ENCODE measurements at regions of chrX and their contacts with region 1.

Region 1: DNA sequence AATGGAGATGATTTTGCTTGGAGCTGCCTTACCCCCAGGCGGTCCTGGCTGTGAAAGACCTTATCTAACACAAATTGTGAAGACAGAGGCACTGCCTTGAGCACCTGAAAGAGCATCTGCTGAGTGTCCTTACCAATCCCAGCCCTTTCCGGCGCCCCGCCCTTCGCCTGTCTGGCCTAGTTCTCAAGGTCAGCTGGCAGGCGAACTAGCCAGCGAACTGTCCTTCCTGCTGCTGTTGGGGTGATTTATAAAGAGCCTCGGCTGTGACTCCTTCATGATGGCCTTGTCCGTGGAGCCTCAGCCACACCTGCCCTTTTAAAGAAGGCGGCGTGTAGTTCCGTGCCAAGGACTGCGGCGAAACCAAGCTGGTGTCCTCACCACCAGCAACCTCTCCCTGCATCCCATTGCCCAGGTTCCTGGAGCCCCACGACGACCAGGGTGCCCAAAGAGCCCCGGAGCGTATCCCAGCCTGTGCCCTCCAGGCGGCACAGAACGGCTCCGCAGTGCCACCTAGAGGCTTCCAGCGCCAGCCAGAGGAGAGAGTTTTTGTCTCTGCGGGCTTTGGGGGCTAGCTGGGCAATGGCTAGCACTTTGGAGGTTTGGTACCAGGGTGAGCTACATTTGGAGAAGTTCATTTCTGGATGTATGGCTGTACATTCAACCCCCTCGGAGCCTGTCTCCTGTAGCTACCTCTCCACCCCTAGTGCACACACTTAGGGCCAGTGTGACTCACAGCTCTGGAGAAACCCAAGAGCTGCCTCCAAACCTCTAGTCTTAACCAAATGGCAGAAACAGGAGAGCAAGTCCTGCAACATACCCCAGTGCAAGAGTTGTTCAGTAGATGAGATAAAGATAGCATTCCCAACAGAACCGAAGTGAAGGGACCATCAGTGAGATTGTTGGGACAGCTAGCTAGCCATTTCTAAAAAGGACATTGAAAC is 36.8 kb upstream of the VMA21 start:
- DNase-seq: peak; percentile 52
- H3K4me3 Mint-ChIP-seq: no peak overlapping the region
- H3K27ac Mint-ChIP-seq: no peak overlapping the region
- H3K4me1 Mint-ChIP-seq: peaks cover 3% of the 10 kb centered on the region
- H3K27me3 Mint-ChIP-seq: peaks cover 7% of the 10 kb centered on the region

Region 2: DNA sequence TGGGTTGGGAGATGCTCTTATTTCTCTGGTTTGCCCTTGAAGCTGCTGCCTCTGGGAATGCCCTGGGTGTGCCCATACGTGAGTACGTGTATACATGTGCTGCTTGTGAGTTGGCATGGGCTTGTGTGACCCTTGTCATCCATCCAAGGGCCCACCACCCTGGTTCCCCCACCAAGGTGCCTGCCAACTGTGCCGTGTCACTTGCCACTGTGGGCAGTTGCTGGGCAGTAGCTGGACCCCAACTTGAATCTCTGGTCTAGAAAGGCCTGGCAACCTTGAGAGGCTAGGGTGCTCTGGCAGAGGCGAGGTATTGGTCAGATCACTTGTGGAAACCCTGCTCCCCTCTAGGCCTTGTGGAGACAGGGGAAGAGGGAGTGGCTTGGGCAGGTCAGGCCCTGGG is 379.5 kb before region 1 on chrX:
- CTCF ChIA-PET with region 1: no interaction called
- POLR2A ChIA-PET with region 1: no interaction called
- intact Hi-C with region 1: no loop called
- DNase-seq: no peak
- H3K4me3 Mint-ChIP-seq: no peak overlapping the region
- H3K27ac Mint-ChIP-seq: no peak overlapping the region
- H3K4me1 Mint-ChIP-seq: peaks cover 9% of the 10 kb centered on the region
- H3K27me3 Mint-ChIP-seq: peaks cover 3% of the 10 kb centered on the region

Region 3: GRCh38 chrX:151151665-151152267 is 208.4 kb before region 1 on chrX:
- CTCF ChIA-PET with region 1: interaction called, 23 read pairs
- POLR2A ChIA-PET with region 1: no interaction called
- intact Hi-C with region 1: loop called (anchors 1 kb)
- DNase-seq: peak; percentile 25
- H3K4me3 Mint-ChIP-seq: no peak overlapping the region
- H3K27ac Mint-ChIP-seq: no peak overlapping the region
- H3K4me1 Mint-ChIP-seq: no peaks in the 10 kb centered on the region
- H3K27me3 Mint-ChIP-seq: peaks cover 15% of the 10 kb centered on the region

Region 4: GRCh38 chrX:151396825-151397740 is 36.9 kb after region 1 on chrX and contains the start of gene VMA21:
- CTCF ChIA-PET with region 1: interaction called, 18 read pairs
- POLR2A ChIA-PET with region 1: no interaction called
- intact Hi-C with region 1: no loop called
- DNase-seq: peak; percentile 89
- H3K4me3 Mint-ChIP-seq: peak within 1 kb of the TSS; percentile 89
- H3K27ac Mint-ChIP-seq: peak within 1 kb of the TSS; percentile 96
- H3K4me1 Mint-ChIP-seq: peaks cover 45% of the 10 kb centered on the region
- H3K27me3 Mint-ChIP-seq: no peaks in the 10 kb centered on the region
- total RNA-seq, gene VMA21: 39.9 to 43.6 TPM

Region 5: GRCh38 chrX:151488677-151489076 is 128.5 kb after region 1 on chrX:
- CTCF ChIA-PET with region 1: no interaction called
- POLR2A ChIA-PET with region 1: no interaction called
- intact Hi-C with region 1: loop called (anchors 10 kb)
- DNase-seq: peak; percentile 13
- H3K4me3 Mint-ChIP-seq: no peak overlapping the region
- H3K27ac Mint-ChIP-seq: no peak overlapping the region
- H3K4me1 Mint-ChIP-seq: no peaks in the 10 kb centered on the region
- H3K27me3 Mint-ChIP-seq: no peaks in the 10 kb centered on the region

Region 6: DNA sequence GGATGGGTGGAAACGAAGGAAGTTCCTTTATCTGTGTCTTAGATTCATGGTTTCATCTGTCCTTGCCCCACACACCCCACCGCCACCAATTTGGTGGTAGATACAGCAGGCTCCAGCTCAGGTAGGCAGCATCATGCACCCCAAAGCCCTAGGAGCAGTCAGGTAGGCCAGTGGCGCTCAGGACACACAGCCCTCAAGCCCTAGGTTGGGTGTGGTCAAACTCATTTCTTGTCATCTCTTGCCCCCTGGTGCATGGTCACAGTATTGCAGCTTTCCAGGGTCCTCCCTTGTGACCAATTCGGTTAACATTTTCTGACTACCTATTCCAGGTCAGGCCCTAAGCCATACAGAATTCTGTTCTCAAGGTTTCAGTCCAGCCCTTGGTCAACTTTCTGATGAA is 320.6 kb after region 1 on chrX:
- CTCF ChIA-PET with region 1: no interaction called
- POLR2A ChIA-PET with region 1: no interaction called
- intact Hi-C with region 1: loop called (anchors 5 kb)
- DNase-seq: peak; percentile 68
- H3K4me3 Mint-ChIP-seq: no peak overlapping the region
- H3K27ac Mint-ChIP-seq: no peak overlapping the region
- H3K4me1 Mint-ChIP-seq: no peaks in the 10 kb centered on the region
- H3K27me3 Mint-ChIP-seq: peaks cover 9% of the 10 kb centered on the region

Measured in activated CD4-positive, alpha-beta memory T cell treated with anti-CD3 and anti-CD28 coated beads for 36 hours (primary cell).